Tibial artery (tissue), 4 donors: ENCODE measurements at regions of chr2 and their contacts with region 1.

Region 1: DNA sequence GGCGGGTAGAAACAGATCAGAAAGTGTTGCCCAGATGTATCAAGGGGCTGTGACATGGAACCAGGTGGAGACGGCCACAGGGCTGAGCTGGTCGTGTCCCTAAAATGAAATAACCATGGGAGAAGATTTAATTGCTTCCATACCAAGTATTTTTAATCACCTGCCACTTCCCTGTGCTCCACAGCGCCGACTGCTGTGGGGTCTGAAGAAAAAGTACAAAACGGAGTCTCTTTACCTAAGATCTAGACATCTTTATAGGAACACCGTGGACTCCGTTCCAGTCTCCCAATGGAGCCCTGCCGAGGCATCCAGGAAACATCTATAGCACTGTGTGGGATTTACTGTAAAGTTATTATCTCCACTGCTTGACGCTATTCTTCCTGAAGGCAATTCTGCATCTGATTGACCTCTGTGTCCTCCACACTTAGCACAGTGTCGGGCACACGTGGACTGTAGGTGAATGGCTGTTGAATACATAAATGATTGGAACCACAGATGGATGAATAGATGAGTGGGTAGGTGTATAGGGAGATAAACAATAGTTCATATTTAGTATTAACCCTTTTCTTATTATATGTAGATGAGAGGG is 21.6 kb upstream of the GYPC start:
- DNase-seq: no peak
- H3K4me3 ChIP-seq: no peak overlapping the region
- H3K27ac ChIP-seq: no peak overlapping the region
- H3K4me1 ChIP-seq: peaks cover 0 to 17% (median 0%) of the 10 kb centered on the region in 4 donors
- H3K27me3 ChIP-seq: no peaks in the 10 kb centered on the region
- CTCF ChIP-seq: no peak

Region 2: DNA sequence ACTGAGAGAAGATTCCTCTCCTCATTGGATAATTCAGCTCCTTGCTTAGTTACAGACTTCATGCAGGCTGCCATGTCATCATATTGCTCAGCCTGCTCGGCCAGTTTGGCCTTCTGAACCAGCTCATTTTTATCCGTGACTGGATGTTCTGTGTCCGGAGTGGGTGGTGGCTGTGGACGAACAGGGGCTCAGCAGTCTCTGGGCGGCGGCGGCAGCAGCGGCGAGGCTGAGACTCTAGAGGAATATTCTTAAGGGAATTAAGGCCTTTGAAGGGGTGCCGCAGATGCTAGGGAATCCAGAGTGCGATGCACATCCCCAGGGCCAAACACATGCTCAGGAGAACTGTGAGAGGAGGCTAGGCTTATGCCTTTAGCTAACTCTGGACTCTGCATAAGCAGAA is 76.3 kb before region 1 on chr2:
- intact Hi-C with region 1: no loop called
- DNase-seq: no peak
- H3K4me3 ChIP-seq: no peak overlapping the region
- H3K27ac ChIP-seq: no peak overlapping the region
- H3K4me1 ChIP-seq: no peaks in the 10 kb centered on the region
- H3K27me3 ChIP-seq: no peaks in the 10 kb centered on the region
- CTCF ChIP-seq: no peak

Region 3: GRCh38 chr2:126664639-126665038 is 30.3 kb after region 1 on chr2:
- intact Hi-C with region 1: loop called (anchors 1 kb)
- DNase-seq: no peak
- H3K4me3 ChIP-seq: no peak overlapping the region
- H3K27ac ChIP-seq: peak overlapping the region in 1 of 2 donors; percentile 35
- H3K4me1 ChIP-seq: peaks cover 0 to 91% (median 38%) of the 10 kb centered on the region in 4 donors
- H3K27me3 ChIP-seq: no peaks in the 10 kb centered on the region
- CTCF ChIP-seq: no peak

Region 4: DNA sequence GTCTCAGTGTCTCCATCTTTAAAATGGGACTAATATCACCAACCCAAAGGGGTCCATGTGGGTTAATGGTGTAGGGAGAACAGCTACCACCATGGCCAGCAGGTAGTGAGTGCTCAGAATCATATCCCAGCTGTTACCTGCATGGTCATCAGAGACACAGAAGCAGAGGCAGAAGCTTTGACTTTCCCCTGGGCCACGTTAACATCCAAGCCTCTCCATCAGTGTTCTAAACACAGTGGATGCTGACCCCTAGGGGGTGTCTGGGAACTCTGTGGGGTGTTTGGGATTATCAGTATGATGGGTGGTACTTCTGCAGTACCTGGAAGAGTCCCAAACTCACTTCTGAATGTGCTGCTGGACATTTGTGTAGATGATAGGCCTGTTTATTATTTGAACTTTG is 115.2 kb after region 1 on chr2:
- intact Hi-C with region 1: no loop called
- DNase-seq: no peak
- H3K4me3 ChIP-seq: no peak overlapping the region
- H3K27ac ChIP-seq: no peak overlapping the region
- H3K4me1 ChIP-seq: no peaks in the 10 kb centered on the region
- H3K27me3 ChIP-seq: no peaks in the 10 kb centered on the region
- CTCF ChIP-seq: peak; percentile 10 to 21